MCF 10A (cell line): ENCODE measurements at regions of chr4 and their contacts with region 1.

Region 1: GRCh38 chr4:84932462-84932861 is 34.0 kb downstream of the WDFY3 start:
- DNase-seq: no peak
- H3K4me3 Mint-ChIP-seq: no peak overlapping the region
- H3K27ac Mint-ChIP-seq: no peak overlapping the region
- H3K4me1 Mint-ChIP-seq: peaks cover 10% of the 10 kb centered on the region
- H3K27me3 Mint-ChIP-seq: no peaks in the 10 kb centered on the region
- CTCF ChIP-seq: no peak

Region 2: DNA sequence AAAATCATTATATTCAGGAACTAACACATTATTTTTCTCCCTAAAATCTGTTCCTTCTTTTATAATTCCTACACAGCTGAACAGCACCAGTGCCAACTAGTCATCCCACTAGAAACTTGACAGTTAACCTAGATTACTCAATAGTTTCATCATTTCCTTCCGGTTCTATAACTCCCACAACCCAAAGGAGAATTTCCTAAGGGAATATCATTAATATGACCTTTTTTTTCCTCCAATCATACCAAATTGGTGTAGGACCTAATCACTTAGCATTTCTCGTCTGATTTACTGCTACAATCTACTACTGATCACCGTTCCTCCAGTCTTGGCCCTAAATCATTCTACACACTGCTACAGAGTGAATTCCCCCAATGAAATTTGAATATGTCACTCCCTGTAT is 11.8 kb before region 1 on chr4:
- CTCF ChIA-PET with region 1: interaction called, 3 read pairs
- POLR2A ChIA-PET with region 1: interaction called, 15 read pairs
- intact Hi-C with region 1: no loop called
- DNase-seq: peak; percentile 80
- H3K4me3 Mint-ChIP-seq: no peak overlapping the region
- H3K27ac Mint-ChIP-seq: peak overlapping the region; percentile 34
- H3K4me1 Mint-ChIP-seq: peaks cover 33% of the 10 kb centered on the region
- H3K27me3 Mint-ChIP-seq: no peaks in the 10 kb centered on the region
- CTCF ChIP-seq: no peak